Breast epithelium (tissue), 4 donors: ENCODE measurements at regions of chr9 and their contacts with region 1.

Region 1: GRCh38 chr9:26210338-26210851 is 532.2 kb upstream of the TUSC1 start:
- DNase-seq: no peak
- H3K4me3 ChIP-seq: peak overlapping the region in 1 of 3 donors; percentile 24
- H3K27ac ChIP-seq: no peak overlapping the region
- H3K4me1 ChIP-seq: no peaks in the 10 kb centered on the region
- H3K27me3 ChIP-seq: no peaks in the 10 kb centered on the region
- CTCF ChIP-seq: no peak
- POLR2A ChIP-seq: no peak

Region 2: DNA sequence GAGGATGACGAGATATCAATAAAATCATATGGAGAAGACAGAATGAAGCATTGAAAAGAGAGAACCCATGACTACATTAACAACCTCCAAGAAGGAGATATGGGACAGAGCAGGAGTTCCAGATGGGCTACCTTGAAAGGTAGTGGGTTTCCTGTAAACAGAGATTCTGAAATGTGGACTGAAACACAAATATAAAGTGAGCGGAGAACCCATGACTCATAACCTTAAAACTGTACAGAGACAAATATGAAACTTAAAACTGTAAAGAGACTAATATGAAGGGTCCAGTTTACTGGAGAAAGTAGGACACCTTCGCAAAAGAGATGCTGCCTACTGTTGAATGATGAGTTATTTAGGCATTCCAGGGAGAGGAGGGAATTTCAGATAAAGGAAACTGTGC is 298.5 kb after region 1 on chr9:
- intact Hi-C with region 1: loop called (anchors 5 kb)
- DNase-seq: no peak
- H3K4me3 ChIP-seq: no peak overlapping the region
- H3K27ac ChIP-seq: no peak overlapping the region
- H3K4me1 ChIP-seq: no peaks in the 10 kb centered on the region
- H3K27me3 ChIP-seq: no peaks in the 10 kb centered on the region
- CTCF ChIP-seq: no peak
- POLR2A ChIP-seq: no peak